CD8-positive, alpha-beta T cell (primary cell): ENCODE measurements at regions of chr15 and their contacts with region 1.

Region 1: GRCh38 chr15:59688841-59689625 is at the start of gene BNIP2:
- DNase-seq: peak; percentile 99 to 100 (median 100)
- ATAC-seq: peak; percentile 88
- H3K4me3 ChIP-seq: peak within 1 kb of the TSS; percentile 81 to 98
- H3K4me3 Mint-ChIP-seq: peak within 1 kb of the TSS; percentile 93
- H3K27ac ChIP-seq: peak within 1 kb of the TSS; percentile 98 to 100
- H3K27ac Mint-ChIP-seq: peak within 1 kb of the TSS; percentile 96
- H3K4me1 ChIP-seq: peaks cover 33% of the 10 kb centered on the region
- H3K4me1 Mint-ChIP-seq: peaks cover 46% of the 10 kb centered on the region
- H3K27me3 ChIP-seq: no peaks in the 10 kb centered on the region
- H3K27me3 Mint-ChIP-seq: no peaks in the 10 kb centered on the region
- CTCF ChIP-seq: no peak
- total RNA-seq, gene BNIP2: 107 to 114 TPM

Region 2: DNA sequence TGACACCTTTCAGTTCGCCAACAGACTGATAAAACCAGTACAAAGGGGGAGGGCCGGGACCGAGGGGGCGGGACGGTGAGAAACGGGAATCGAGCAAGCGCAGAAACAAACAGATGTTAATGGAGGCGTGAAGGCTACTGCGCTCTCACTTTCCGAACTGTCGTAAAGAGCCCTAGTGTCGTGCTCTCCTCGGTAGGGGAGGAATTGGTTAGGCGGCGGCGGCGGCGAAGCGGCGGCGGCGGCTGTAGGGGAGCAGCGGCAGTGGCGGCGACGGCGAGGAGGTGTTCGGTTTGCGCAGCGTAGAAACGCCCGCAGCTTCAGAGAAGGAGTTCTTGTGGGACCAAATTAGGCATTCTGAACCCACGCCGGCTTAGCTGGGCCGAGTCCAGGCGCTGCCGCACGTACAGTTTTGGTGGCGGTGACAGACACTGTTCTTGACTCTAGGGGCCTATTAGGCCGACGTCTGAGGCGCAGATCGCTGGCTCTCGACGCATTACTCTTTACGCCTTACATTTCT is 701.5 kb before region 1 on chr15 and contains the start of gene RNF111:
- CTCF ChIA-PET with region 1: no interaction called
- POLR2A ChIA-PET with region 1: no interaction called
- intact Hi-C with region 1: loop called (anchors 1 to 2 kb)
- DNase-seq: peak; percentile 77 to 97 (median 88)
- ATAC-seq: peak; percentile 95
- H3K4me3 ChIP-seq: peak within 1 kb of the TSS; percentile 87 to 100
- H3K4me3 Mint-ChIP-seq: peak within 1 kb of the TSS; percentile 95
- H3K27ac ChIP-seq: peak within 1 kb of the TSS; percentile 84
- H3K27ac Mint-ChIP-seq: peak within 1 kb of the TSS; percentile 94
- H3K4me1 ChIP-seq: peaks cover 23% of the 10 kb centered on the region
- H3K4me1 Mint-ChIP-seq: peaks cover 43% of the 10 kb centered on the region
- H3K27me3 ChIP-seq: no peaks in the 10 kb centered on the region
- H3K27me3 Mint-ChIP-seq: no peaks in the 10 kb centered on the region
- CTCF ChIP-seq: no peak
- total RNA-seq, gene RNF111: 25.2 to 28.4 TPM

Region 3: GRCh38 chr15:59622289-59622688 is 66.7 kb before region 1 on chr15:
- CTCF ChIA-PET with region 1: no interaction called
- POLR2A ChIA-PET with region 1: no interaction called
- intact Hi-C with region 1: no loop called
- DNase-seq: peak in 4 of 9 experiments; percentile 14 to 33 (median 18)
- ATAC-seq: no peak
- H3K4me3 ChIP-seq: no peak overlapping the region
- H3K4me3 Mint-ChIP-seq: no peak overlapping the region
- H3K27ac ChIP-seq: no peak overlapping the region
- H3K27ac Mint-ChIP-seq: no peak overlapping the region
- H3K4me1 ChIP-seq: no peaks in the 10 kb centered on the region
- H3K4me1 Mint-ChIP-seq: no peaks in the 10 kb centered on the region
- H3K27me3 ChIP-seq: no peaks in the 10 kb centered on the region
- H3K27me3 Mint-ChIP-seq: peaks cover 22% of the 10 kb centered on the region
- CTCF ChIP-seq: no peak

Region 4: GRCh38 chr15:59751552-59752413 is 62.8 kb after region 1 on chr15:
- CTCF ChIA-PET with region 1: interaction called, 18 read pairs
- POLR2A ChIA-PET with region 1: no interaction called
- intact Hi-C with region 1: loop called in 1 of 2 experiments (anchors 5 kb)
- DNase-seq: peak in 2 of 9 experiments; percentile 69 to 81
- ATAC-seq: peak; percentile 98
- H3K4me3 ChIP-seq: no peak overlapping the region
- H3K4me3 Mint-ChIP-seq: no peak overlapping the region
- H3K27ac ChIP-seq: no peak overlapping the region
- H3K27ac Mint-ChIP-seq: peak overlapping the region; percentile 49
- H3K4me1 ChIP-seq: peaks cover 6% of the 10 kb centered on the region
- H3K4me1 Mint-ChIP-seq: peaks cover 9% of the 10 kb centered on the region
- H3K27me3 ChIP-seq: no peaks in the 10 kb centered on the region
- H3K27me3 Mint-ChIP-seq: peaks cover 3% of the 10 kb centered on the region
- CTCF ChIP-seq: peak; percentile 95

Region 5: GRCh38 chr15:59779110-59779509 is 90.1 kb after region 1 on chr15:
- CTCF ChIA-PET with region 1: no interaction called
- POLR2A ChIA-PET with region 1: no interaction called
- intact Hi-C with region 1: no loop called
- DNase-seq: no peak
- ATAC-seq: no peak
- H3K4me3 ChIP-seq: no peak overlapping the region
- H3K4me3 Mint-ChIP-seq: no peak overlapping the region
- H3K27ac ChIP-seq: no peak overlapping the region
- H3K27ac Mint-ChIP-seq: no peak overlapping the region
- H3K4me1 ChIP-seq: peaks cover 8% of the 10 kb centered on the region
- H3K4me1 Mint-ChIP-seq: peaks cover 6% of the 10 kb centered on the region
- H3K27me3 ChIP-seq: no peaks in the 10 kb centered on the region
- H3K27me3 Mint-ChIP-seq: no peaks in the 10 kb centered on the region
- CTCF ChIP-seq: no peak

Region 6: GRCh38 chr15:60128000-60128376 is 439.0 kb after region 1 on chr15:
- CTCF ChIA-PET with region 1: interaction called, 3 read pairs
- POLR2A ChIA-PET with region 1: no interaction called
- intact Hi-C with region 1: loop called (anchors 2 to 5 kb)
- DNase-seq: peak in 1 of 9 experiments; percentile 50
- ATAC-seq: no peak
- H3K4me3 ChIP-seq: peak overlapping the region; percentile 54 to 71
- H3K4me3 Mint-ChIP-seq: peak overlapping the region; percentile 83
- H3K27ac ChIP-seq: peak overlapping the region; percentile 70 to 86
- H3K27ac Mint-ChIP-seq: peak overlapping the region; percentile 91
- H3K4me1 ChIP-seq: peaks cover 5% of the 10 kb centered on the region
- H3K4me1 Mint-ChIP-seq: peaks cover 32% of the 10 kb centered on the region
- H3K27me3 ChIP-seq: no peaks in the 10 kb centered on the region
- H3K27me3 Mint-ChIP-seq: peaks cover 2% of the 10 kb centered on the region
- CTCF ChIP-seq: no peak

Region 7: DNA sequence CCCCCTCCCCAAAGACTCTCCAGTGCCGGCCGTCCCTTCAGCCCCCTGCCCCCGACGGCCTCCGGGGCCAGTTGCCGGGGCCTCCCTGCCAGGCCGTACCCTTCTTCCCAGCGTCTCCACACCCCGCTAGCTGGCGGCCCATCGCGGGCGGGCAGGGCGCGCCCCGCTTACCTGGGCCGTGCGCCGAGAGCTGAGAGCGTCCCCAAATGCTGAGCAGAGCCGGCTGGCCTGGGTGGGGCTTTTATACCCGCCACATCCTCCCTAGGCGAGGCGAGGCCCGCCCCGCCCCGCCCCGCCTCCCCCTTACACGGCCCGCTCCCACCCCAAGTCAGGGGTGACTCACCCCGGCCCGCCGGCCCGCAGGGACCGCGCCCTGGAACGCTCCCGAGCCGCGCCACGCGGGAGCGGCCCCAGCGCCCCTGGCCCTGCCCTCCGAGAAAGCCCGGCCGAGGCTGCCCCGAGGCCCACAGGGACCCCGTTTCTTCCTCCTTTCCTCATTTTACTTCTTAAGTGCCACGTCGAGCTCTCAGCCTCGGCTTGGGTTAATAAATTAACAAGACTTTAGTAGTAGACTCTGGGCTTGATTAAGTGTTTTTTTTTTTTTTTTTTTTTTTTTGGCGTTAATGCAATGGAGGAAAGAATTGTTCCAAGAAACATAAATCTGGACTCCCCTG is 708.9 kb after region 1 on chr15 and contains the start of gene ANXA2:
- CTCF ChIA-PET with region 1: no interaction called
- POLR2A ChIA-PET with region 1: interaction called, 5 read pairs
- intact Hi-C with region 1: loop called in 1 of 2 experiments (anchors 5 kb)
- DNase-seq: peak; percentile 61 to 91 (median 85)
- ATAC-seq: peak; percentile 85
- H3K4me3 ChIP-seq: peak within 1 kb of the TSS; percentile 63 to 66
- H3K4me3 Mint-ChIP-seq: peak within 1 kb of the TSS; percentile 85
- H3K27ac ChIP-seq: peak within 1 kb of the TSS; percentile 50 to 68
- H3K27ac Mint-ChIP-seq: peak within 1 kb of the TSS; percentile 87
- H3K4me1 ChIP-seq: peaks cover 14% of the 10 kb centered on the region
- H3K4me1 Mint-ChIP-seq: peaks cover 31% of the 10 kb centered on the region
- H3K27me3 ChIP-seq: peaks cover 0 to 3% of the 10 kb centered on the region in 2 experiments
- H3K27me3 Mint-ChIP-seq: no peaks in the 10 kb centered on the region
- CTCF ChIP-seq: no peak
- total RNA-seq, gene ANXA2: 25.8 to 31.7 TPM

Region 8: GRCh38 chr15:60840306-60840702 is 1151.3 kb after region 1 on chr15:
- CTCF ChIA-PET with region 1: no interaction called
- POLR2A ChIA-PET with region 1: no interaction called
- intact Hi-C with region 1: loop called in 1 of 2 experiments (anchors 10 kb)
- DNase-seq: peak in 4 of 9 experiments; percentile 4 to 55 (median 28)
- ATAC-seq: no peak
- H3K4me3 ChIP-seq: peak overlapping the region; percentile 43
- H3K4me3 Mint-ChIP-seq: peak overlapping the region; percentile 86
- H3K27ac ChIP-seq: peak overlapping the region; percentile 51 to 84
- H3K27ac Mint-ChIP-seq: peak overlapping the region; percentile 96
- H3K4me1 ChIP-seq: peaks cover 60% of the 10 kb centered on the region
- H3K4me1 Mint-ChIP-seq: peaks cover 82% of the 10 kb centered on the region
- H3K27me3 ChIP-seq: no peaks in the 10 kb centered on the region
- H3K27me3 Mint-ChIP-seq: no peaks in the 10 kb centered on the region
- CTCF ChIP-seq: no peak